CD4-positive, alpha-beta memory T cell (primary cell): ENCODE measurements at regions of chr5 and their contacts with region 1.

Region 1: GRCh38 chr5:59412428-59412827 is 481.1 kb downstream of the PDE4D start:
- DNase-seq: no peak
- H3K4me3 ChIP-seq: no peak overlapping the region
- H3K4me3 Mint-ChIP-seq: no peak overlapping the region
- H3K27ac ChIP-seq: no peak overlapping the region
- H3K27ac Mint-ChIP-seq: no peak overlapping the region
- H3K4me1 ChIP-seq: no peaks in the 10 kb centered on the region
- H3K4me1 Mint-ChIP-seq: no peaks in the 10 kb centered on the region
- H3K27me3 ChIP-seq: no peaks in the 10 kb centered on the region
- H3K27me3 Mint-ChIP-seq: peaks cover 2 to 5% of the 10 kb centered on the region in 2 donors

Region 2: GRCh38 chr5:59206132-59206581 is 206.3 kb before region 1 on chr5:
- CTCF ChIA-PET with region 1: no interaction called
- POLR2A ChIA-PET with region 1: no interaction called
- intact Hi-C with region 1: no loop called
- DNase-seq: no peak
- H3K4me3 ChIP-seq: no peak overlapping the region
- H3K4me3 Mint-ChIP-seq: no peak overlapping the region
- H3K27ac ChIP-seq: no peak overlapping the region
- H3K27ac Mint-ChIP-seq: no peak overlapping the region
- H3K4me1 ChIP-seq: no peaks in the 10 kb centered on the region
- H3K4me1 Mint-ChIP-seq: no peaks in the 10 kb centered on the region
- H3K27me3 ChIP-seq: no peaks in the 10 kb centered on the region
- H3K27me3 Mint-ChIP-seq: peaks cover 5 to 6% of the 10 kb centered on the region in 2 donors

Region 3: DNA sequence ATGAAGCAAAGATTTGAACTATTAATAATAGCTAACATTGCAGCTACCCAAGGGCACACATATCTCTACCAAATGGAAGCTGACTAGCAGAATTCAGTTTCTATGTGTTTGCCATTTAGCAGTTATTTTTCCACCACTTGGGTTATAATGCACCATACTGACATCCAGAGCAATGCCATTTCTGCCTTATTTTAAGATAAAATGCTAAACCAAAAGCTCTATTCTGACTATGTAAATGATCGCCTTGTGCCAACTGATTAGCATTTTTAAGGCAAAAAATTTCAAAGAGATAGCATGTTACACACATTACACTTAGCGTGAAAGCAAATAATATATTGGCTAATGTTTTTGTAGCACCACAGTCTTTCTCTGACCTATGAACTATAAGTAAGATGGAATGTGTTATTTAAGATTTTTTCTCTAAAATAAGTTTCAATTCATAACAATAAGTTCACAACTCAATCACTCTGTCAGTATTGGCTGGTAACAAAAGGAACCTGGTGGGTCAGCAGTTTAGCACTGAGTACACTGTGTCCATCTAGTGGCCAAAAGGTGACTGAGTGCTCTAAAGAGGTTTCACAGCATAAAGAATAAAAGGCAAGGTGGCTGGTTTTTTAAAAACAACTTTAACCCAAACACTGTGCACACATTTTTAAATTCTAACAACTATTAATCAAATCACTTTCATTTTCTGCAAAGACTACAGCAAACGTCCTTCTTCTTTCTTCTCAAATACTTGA is 37.6 kb after region 1 on chr5:
- CTCF ChIA-PET with region 1: no interaction called
- POLR2A ChIA-PET with region 1: no interaction called
- intact Hi-C with region 1: loop called (anchors 1 kb)
- DNase-seq: no peak
- H3K4me3 ChIP-seq: no peak overlapping the region
- H3K4me3 Mint-ChIP-seq: no peak overlapping the region
- H3K27ac ChIP-seq: no peak overlapping the region
- H3K27ac Mint-ChIP-seq: no peak overlapping the region
- H3K4me1 ChIP-seq: no peaks in the 10 kb centered on the region
- H3K4me1 Mint-ChIP-seq: no peaks in the 10 kb centered on the region
- H3K27me3 ChIP-seq: no peaks in the 10 kb centered on the region
- H3K27me3 Mint-ChIP-seq: no peaks in the 10 kb centered on the region